ENCODE measurements at regions of chr4 and their contacts with region 1.

Region 1: DNA sequence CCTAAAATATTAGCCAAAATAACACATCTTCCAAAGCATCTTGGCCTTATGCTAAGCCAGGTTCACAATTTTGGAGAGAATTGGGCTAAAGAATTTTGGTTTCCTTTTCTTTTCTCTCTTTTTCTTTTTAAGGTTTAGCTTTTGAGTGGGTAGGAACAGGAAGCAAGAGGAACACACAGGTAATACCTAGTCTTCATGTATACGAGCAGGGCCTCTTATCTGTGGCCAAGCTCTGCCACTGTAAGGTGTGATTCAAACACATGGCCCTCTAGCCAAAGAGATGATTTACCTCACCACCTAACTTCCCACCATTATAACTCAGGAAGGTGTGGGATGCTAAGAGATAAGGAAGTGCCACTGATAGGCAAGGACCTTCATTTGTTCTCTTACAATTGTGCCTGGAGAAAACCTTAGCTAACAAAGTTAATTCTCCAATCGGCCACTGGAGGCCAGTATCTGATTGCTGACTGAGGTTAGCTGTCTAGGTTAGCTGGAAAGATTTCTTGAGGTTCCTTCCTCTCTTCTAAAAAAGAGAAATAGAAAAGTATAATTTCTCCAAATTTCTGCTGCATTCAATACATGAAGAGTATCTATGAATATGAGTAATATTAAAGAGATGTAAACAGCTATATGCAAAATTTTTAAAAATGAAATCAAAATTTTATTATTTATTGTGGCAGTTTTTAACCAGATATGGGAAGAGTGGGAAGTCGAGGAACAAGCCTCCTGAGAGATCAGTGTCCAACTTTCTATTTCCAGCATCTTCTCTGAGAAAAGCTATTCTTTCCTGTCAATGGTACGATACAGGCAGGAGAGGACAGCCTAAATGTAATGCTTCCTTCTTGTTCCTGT is 30.1 kb upstream of the BBS7 start:
- DNase-seq: peak; percentile 66
- ATAC-seq: peak; percentile 70
- H3K4me3 ChIP-seq: no peak overlapping the region
- H3K27ac ChIP-seq: no peak overlapping the region
- H3K4me1 ChIP-seq: no peaks in the 10 kb centered on the region
- H3K27me3 ChIP-seq: peaks cover 30% of the 10 kb centered on the region
- CTCF ChIP-seq: peak; percentile 80

Region 2: DNA sequence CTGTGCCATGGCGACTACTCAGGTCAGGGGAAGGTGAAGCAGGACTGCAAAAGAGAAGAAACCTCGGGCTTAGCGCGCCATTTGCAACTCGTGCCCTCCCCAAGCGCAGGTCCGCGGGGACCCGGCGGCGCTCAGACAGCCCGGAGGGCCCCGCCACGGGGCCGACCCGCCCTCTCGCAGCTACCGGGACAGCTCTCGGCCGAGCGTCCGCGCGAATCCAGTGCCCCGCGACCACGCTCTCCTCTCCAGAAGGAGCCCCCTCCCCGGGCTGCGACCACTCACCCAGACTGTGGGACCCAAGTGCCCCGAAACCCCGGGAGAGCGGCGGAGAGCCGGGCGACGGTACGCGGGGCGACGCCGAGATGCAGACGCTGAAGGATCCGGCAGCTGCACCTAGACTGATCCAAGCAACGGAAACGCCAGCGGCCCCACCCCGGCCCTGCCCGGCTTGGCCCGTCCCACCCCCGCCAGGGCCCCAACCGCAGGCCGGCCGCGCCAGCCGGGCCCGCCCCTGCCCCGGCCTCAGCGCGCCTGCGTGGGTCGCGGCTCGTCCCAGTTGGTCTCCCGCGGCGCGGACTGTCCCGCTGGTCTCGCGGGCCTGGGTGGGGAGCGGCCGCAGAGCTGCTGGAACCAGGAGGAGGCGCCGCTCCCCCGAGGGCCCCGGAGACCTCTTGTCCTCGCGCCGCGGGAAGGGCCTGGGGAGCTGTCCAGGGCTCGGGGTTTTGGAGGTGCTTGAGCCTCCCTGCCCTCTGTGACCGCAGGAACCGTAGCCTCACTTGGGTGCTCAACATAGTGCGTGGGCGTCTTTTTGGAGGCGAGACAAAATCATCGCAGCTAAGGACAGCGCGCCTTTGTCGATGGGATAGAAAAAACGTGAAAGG is 203.5 kb before region 1 on chr4 and contains the start of gene ANXA5:
- CTCF ChIA-PET with region 1: no interaction called
- POLR2A ChIA-PET with region 1: no interaction called
- intact Hi-C with region 1: no loop called
- DNase-seq: peak; percentile 86
- ATAC-seq: peak; percentile 84
- H3K4me3 ChIP-seq: peak within 1 kb of the TSS; percentile 89
- H3K27ac ChIP-seq: peak within 1 kb of the TSS; percentile 90
- H3K4me1 ChIP-seq: peaks cover 21% of the 10 kb centered on the region
- H3K27me3 ChIP-seq: no peaks in the 10 kb centered on the region
- CTCF ChIP-seq: peak; percentile 30; the same call in 1 of the 2 replicates
- total RNA-seq, gene ANXA5: 271 and 280 TPM in 2 replicates

Region 3: GRCh38 chr4:122003335-122003734 is 103.0 kb after region 1 on chr4:
- CTCF ChIA-PET with region 1: interaction called, 3 read pairs
- POLR2A ChIA-PET with region 1: no interaction called
- intact Hi-C with region 1: loop called (anchors 5 kb)
- DNase-seq: peak; percentile 44
- ATAC-seq: peak; percentile 29; the same call in 1 of the 2 replicates
- H3K4me3 ChIP-seq: no peak overlapping the region
- H3K27ac ChIP-seq: no peak overlapping the region
- H3K4me1 ChIP-seq: no peaks in the 10 kb centered on the region
- H3K27me3 ChIP-seq: peaks cover 20% of the 10 kb centered on the region
- CTCF ChIP-seq: 0 out of 2 replicates have a peak, but pooled peaks have one; percentile 43

Region 4: GRCh38 chr4:122163767-122164166 is 263.4 kb after region 1 on chr4:
- CTCF ChIA-PET with region 1: no interaction called
- POLR2A ChIA-PET with region 1: no interaction called
- intact Hi-C with region 1: no loop called
- DNase-seq: no peak
- ATAC-seq: no peak
- H3K4me3 ChIP-seq: no peak overlapping the region
- H3K27ac ChIP-seq: no peak overlapping the region
- H3K4me1 ChIP-seq: no peaks in the 10 kb centered on the region
- H3K27me3 ChIP-seq: no peaks in the 10 kb centered on the region
- CTCF ChIP-seq: no peak

Region 5: GRCh38 chr4:122224348-122224747 is 324.0 kb after region 1 on chr4:
- CTCF ChIA-PET with region 1: interaction called, 4 read pairs
- POLR2A ChIA-PET with region 1: no interaction called
- intact Hi-C with region 1: loop called (anchors 1 kb)
- DNase-seq: peak; percentile 34
- ATAC-seq: no peak
- H3K4me3 ChIP-seq: no peak overlapping the region
- H3K27ac ChIP-seq: no peak overlapping the region
- H3K4me1 ChIP-seq: no peaks in the 10 kb centered on the region
- H3K27me3 ChIP-seq: no peaks in the 10 kb centered on the region
- CTCF ChIP-seq: peak; percentile 58

Region 6: DNA sequence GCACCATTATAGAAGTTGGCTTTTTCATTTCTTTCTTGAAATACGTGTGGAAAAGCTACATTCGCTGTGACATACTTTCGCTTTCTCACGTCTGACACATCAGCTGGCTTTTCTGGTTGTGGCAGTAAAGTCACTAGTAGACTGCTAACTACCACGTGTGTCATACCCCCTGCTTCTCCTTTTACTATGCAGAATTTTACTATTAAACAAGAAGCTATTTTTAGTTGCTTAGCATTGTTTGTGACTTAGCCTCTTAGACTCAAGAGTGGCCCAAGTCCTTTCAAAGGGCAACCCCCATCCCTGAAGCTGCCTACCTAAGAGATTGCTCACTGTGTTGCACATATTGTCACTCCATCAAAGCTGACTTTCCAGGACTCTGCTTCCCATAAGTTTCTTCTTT is 558.3 kb after region 1 on chr4:
- CTCF ChIA-PET with region 1: no interaction called
- POLR2A ChIA-PET with region 1: no interaction called
- intact Hi-C with region 1: loop called (anchors 10 kb)
- DNase-seq: peak; percentile 73
- ATAC-seq: peak; percentile 84
- H3K4me3 ChIP-seq: peak overlapping the region; percentile 67
- H3K27ac ChIP-seq: peak overlapping the region; percentile 56
- H3K4me1 ChIP-seq: peaks cover 24% of the 10 kb centered on the region
- H3K27me3 ChIP-seq: no peaks in the 10 kb centered on the region
- CTCF ChIP-seq: no peak